Activated T-helper 2 cell treated with anti-CD3 and anti-CD28 coated beads, Interferon-gamma antibody, Interleukin-2, Interleukin-4, amounts not matched to agents 10 μg/mL and 5 μg/mL and 100 μg/mL, durations not matched to agents 14 hours and 24 hours and 36 hours (primary cell): ENCODE measurements at regions of chr1 and their contacts with region 1.

Region 1: GRCh38 chr1:16498573-16499413 is 15.3 kb downstream of the RNU1-1 start:
- DNase-seq: peak; percentile 83
- H3K4me3 Mint-ChIP-seq: peak overlapping the region; percentile 84
- H3K27ac Mint-ChIP-seq: no peak overlapping the region
- H3K4me1 Mint-ChIP-seq: peaks cover 10% of the 10 kb centered on the region
- H3K27me3 Mint-ChIP-seq: peaks cover 11% of the 10 kb centered on the region

Region 2: DNA sequence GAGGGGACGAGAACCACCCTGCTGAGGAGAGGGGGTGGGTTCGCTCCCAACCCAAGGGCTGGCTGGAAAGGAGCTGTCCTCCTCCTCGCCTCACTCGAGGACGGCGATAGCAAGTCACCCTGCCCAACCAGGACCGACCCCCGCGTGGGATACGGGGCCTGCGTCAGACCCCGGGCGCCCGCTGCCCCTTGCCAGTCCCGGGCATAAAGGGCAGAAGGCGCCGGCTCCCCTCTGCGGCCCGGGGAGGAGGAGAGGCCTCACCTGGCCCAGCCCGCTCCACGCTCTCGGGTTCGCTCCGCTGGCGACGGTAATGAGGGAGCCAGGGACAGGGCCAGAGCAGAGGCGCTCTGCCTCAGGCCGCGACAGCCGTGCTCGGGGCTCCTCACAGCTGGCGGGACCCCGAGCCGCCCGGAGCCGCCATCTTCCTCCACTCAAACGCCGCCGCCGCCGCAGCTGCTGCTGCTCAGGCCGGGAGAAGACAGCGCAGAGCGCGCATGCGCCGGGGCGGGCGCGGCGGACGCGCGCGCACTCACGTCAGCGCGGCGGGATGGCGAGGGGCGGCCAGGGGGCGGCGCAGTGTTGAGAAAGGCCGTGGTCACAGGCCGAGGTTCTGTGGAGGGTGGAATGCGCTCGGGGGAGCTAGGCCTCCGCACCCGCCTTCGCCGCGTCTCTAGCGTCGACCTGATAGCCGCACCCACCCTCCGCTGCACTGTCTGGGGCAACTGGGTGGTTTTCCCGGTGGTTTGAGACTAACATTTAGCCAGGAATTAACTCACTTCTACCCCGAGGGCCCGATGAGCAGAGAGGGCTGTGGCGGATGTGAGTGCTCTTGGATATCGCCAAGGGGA is 146.6 kb before region 1 on chr1 and contains the start of gene FBXO42:
- intact Hi-C with region 1: loop called (anchors 5 kb)
- DNase-seq: peak; percentile 92
- H3K4me3 Mint-ChIP-seq: peak within 1 kb of the TSS; percentile 96
- H3K27ac Mint-ChIP-seq: peak within 1 kb of the TSS; percentile 93
- H3K4me1 Mint-ChIP-seq: peaks cover 26% of the 10 kb centered on the region
- H3K27me3 Mint-ChIP-seq: no peaks in the 10 kb centered on the region
- total RNA-seq, gene FBXO42: 17.9 and 18.5 TPM in 2 replicates

Region 3: DNA sequence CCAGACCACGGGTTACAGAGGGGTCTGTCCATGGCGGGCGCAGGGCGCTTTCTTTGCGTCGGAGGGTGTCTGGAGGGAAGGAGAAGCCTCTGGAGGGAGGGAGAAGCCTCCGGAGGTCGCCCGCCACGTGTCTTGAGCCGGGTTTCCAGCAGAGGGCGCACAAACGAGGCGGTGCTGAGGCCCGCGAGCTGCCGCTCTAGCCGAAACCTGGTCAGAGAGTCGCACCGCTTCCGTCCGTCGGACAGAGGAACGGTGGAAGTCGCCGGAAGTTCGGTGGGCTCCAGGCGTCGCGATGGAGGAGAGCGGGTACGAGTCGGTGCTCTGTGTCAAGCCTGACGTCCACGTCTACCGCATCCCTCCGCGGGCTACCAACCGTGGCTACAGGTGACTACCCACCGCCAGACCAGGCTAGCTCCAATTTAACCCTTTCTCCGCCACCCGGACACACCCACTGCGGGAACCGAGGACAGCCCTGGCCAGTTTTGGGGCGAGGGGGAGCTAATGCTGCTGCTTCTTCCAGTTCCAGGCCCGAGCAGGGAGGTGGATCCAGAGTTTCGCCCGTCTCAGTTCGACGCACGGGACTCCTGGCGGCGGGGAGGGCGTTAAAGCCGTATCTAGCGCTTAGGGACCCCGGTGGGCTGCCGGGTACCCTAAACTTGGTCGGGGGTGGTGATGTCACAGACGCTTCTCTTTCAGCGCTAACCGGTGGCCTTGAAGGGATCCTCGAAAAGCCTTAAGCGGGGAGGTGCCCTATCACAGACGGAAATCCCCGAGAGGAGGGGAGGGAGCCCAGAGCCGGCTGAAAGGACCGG is 58.1 kb before region 1 on chr1 and contains the start of gene NECAP2:
- intact Hi-C with region 1: loop called (anchors 2 kb)
- DNase-seq: peak; percentile 88
- H3K4me3 Mint-ChIP-seq: peak within 1 kb of the TSS; percentile 89
- H3K27ac Mint-ChIP-seq: peak within 1 kb of the TSS; percentile 84
- H3K4me1 Mint-ChIP-seq: peaks cover 22% of the 10 kb centered on the region
- H3K27me3 Mint-ChIP-seq: no peaks in the 10 kb centered on the region
- total RNA-seq, gene NECAP2: 75.2 and 79.4 TPM in 2 replicates

Region 4: GRCh38 chr1:16464903-16465625 is 33.7 kb before region 1 on chr1:
- intact Hi-C with region 1: no loop called
- DNase-seq: no peak
- H3K4me3 Mint-ChIP-seq: no peak overlapping the region
- H3K27ac Mint-ChIP-seq: no peak overlapping the region
- H3K4me1 Mint-ChIP-seq: no peaks in the 10 kb centered on the region
- H3K27me3 Mint-ChIP-seq: no peaks in the 10 kb centered on the region